ENCODE measurements at regions of chr14 and their contacts with region 1.

Region 1: DNA sequence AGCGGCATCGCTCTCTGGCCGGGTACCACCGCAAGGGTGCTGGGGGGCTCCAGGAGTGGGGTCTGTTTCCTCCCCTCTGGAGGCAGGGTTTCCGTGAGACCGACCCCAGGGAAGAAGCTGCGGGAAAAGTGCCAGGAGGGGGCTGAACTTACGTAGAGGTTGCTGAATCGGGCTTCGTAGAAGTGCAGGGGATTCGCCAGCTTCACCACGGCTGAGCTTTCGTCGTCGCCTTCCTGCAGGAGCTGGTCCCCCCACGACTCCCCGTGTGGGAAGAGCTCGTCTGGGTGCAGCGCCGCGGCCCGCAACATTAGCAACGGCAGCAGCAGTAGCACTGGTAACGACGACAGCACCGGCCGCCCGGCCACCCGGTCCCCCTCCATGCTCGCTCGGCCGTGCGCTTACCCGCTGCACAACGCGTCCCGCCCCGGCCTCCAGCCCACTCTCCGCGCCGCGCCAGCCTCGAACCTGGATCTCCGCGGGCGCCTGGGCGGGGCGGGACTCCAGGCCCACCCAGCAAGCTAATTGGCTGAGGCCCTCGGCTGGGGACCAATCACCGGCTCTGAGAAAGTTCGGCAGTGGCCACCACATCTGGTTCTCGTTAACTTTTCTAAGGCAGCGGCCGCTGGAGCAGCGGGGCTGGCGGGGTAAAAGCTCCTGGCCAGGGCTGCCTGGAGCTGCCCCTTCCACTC is at the start of gene NID2:
- DNase-seq: peak; percentile 41
- H3K4me3 Mint-ChIP-seq: peak within 1 kb of the TSS; percentile 48
- H3K27ac Mint-ChIP-seq: peak within 1 kb of the TSS; percentile 3
- H3K4me1 Mint-ChIP-seq: peaks cover 13% of the 10 kb centered on the region
- H3K27me3 Mint-ChIP-seq: peaks cover 52% of the 10 kb centered on the region
- total RNA-seq, gene NID2: 0.16 and 0.34 TPM in 2 replicates

Region 2: DNA sequence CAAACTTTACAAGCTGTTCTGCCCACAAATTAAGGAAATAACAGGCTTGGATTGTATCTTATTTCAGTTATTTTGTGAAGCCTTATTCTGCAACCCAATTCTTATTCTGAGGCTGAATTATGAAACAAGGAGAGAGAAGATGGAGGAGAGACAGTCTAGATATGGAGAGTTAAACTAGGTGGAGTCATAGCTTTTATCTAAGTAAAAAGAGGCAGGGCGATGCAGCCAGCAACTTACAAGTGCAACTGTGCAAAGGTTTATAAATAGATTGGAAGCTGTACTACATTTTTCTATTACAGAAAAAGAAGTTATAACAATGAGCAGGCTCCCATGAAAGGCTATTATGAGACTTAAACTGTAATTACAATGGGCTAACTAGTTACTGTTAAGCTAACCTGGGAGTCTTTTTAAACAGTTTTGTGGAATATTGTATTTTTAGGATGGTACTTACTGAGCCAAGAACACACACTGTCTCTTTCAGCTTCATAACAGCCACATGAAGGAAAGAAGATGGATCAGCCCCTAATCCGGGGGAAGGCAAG is 22.3 kb before region 1 on chr14:
- intact Hi-C with region 1: loop called (anchors 1 kb)
- DNase-seq: no peak
- H3K4me3 Mint-ChIP-seq: no peak overlapping the region
- H3K27ac Mint-ChIP-seq: no peak overlapping the region
- H3K4me1 Mint-ChIP-seq: peaks cover 8% of the 10 kb centered on the region
- H3K27me3 Mint-ChIP-seq: peaks cover 6% of the 10 kb centered on the region

Region 3: GRCh38 chr14:52272375-52272774 is 203.6 kb after region 1 on chr14:
- intact Hi-C with region 1: loop called (anchors 5 kb)
- DNase-seq: no peak
- H3K4me3 Mint-ChIP-seq: no peak overlapping the region
- H3K27ac Mint-ChIP-seq: no peak overlapping the region
- H3K4me1 Mint-ChIP-seq: peaks cover 21% of the 10 kb centered on the region
- H3K27me3 Mint-ChIP-seq: peaks cover 57% of the 10 kb centered on the region

Measured in activated T-helper 1 cell treated with anti-CD3 and anti-CD28 coated beads, Interleukin-12 subunit alpha, Interleukin-12 subunit beta, Interleukin-2, Interleukin-4 antibody, amounts not matched to agents 30 ng/mL and 10 ng/mL and 1 ng/mL, durations not matched to agents 14 hours and 24 hours and 36 hours (primary cell).